ENCODE measurements at regions of chr1 and their contacts with region 1.

Region 1: GRCh38 chr1:155193275-155193990 is 14.3 kb downstream of the THBS3 start:
- DNase-seq: peak; percentile 87
- H3K4me3 Mint-ChIP-seq: peak overlapping the region; percentile 86
- H3K27ac Mint-ChIP-seq: peak overlapping the region; percentile 96
- H3K4me1 Mint-ChIP-seq: peaks cover 25% of the 10 kb centered on the region
- H3K27me3 Mint-ChIP-seq: no peaks in the 10 kb centered on the region

Region 2: GRCh38 chr1:155167166-155168104 is 26.0 kb before region 1 on chr1:
- CTCF ChIA-PET with region 1: interaction called, 201 read pairs
- POLR2A ChIA-PET with region 1: interaction called, 70 read pairs
- intact Hi-C with region 1: loop called (anchors 2 kb)
- DNase-seq: peak; percentile 92
- H3K4me3 Mint-ChIP-seq: peak overlapping the region; percentile 49
- H3K27ac Mint-ChIP-seq: no peak overlapping the region
- H3K4me1 Mint-ChIP-seq: peaks cover 19% of the 10 kb centered on the region
- H3K27me3 Mint-ChIP-seq: no peaks in the 10 kb centered on the region

Region 3: DNA sequence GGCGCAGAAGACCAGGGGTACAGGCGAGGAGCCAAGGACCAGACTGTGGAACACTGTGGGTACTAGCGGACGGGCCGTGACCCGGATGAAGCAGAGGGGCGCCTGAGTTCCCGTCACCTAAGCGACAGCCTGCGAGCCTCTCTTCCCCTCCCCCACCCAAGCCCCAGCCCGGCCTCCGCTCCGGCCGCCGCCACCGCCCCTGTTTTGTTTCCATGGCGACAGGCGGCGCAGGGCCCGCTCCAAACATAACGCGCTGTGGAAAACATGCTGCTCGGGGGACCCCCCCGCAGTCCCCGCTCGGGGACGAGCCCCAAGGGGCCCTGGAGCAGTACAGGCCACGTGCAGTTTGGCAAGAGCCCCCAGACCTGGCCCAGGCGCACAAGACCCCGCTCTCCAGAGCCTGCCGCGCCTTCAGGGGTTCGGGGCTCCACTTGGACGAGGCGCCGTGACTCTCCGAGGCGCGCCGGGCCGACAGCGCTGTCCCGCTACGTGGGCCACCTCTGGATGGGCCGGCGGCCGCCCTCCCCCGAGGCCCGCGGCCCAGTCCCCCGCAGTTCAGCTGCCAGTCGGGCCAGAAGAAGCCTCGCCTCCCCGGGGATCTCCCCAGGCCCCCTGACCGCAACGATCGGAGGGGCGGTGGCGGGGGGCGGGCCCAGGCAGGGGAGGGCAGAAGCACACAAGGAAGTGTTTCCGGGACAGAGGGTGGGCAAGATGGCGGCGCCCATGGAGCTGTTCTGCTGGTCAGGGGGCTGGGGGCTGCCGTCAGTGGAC is 15.3 kb after region 1 on chr1 and contains the start of gene MTX1:
- CTCF ChIA-PET with region 1: interaction called, 77 read pairs
- POLR2A ChIA-PET with region 1: interaction called, 58 read pairs
- intact Hi-C with region 1: loop called (anchors 2 kb)
- DNase-seq: peak; percentile 92
- H3K4me3 Mint-ChIP-seq: peak within 1 kb of the TSS; percentile 83
- H3K27ac Mint-ChIP-seq: peak within 1 kb of the TSS; percentile 89
- H3K4me1 Mint-ChIP-seq: peaks cover 29% of the 10 kb centered on the region
- H3K27me3 Mint-ChIP-seq: no peaks in the 10 kb centered on the region
- total RNA-seq, gene MTX1: 45.2 to 47.9 TPM

Region 4: DNA sequence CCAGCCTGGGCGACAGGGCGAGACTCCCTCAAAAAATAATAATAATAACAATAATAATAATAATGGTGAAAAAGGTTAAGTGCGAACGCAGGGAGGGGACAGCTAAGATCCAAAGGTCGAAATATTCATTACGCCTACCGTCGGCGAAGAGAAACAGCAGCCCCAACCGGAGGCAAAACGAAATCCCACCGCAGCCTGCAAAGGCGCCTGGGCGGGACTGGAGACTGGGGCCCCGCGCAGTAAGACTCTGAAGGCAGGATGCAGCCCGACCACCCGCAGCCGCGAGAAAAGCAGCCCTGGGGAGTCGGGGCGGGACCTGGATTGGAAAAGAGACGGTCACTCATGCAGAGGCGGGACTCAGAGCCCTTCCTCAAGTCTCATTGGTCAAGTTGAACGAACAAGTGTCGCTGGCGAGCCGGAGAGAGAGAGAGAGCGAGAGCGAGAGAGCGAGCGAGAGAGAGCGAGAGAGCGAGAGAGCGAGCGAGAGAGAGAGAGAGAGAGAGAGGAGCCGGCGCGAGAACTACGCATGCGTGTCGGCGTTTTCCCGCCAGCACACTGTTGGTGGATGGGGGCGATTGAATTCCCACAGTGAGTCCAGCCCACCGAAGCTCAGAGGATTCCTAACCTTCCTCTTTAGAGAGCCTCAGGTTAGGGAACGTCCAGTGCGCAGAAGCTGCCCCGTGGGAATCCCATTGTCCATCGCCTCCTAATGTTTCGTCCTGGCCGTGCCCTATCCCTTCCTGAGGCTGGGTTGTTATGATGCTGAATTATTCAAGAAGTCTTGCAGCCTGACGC is 51.1 kb after region 1 on chr1:
- CTCF ChIA-PET with region 1: interaction called, 19 read pairs
- POLR2A ChIA-PET with region 1: interaction called, 9 read pairs
- intact Hi-C with region 1: loop called (anchors 5 kb)
- DNase-seq: peak; percentile 98
- H3K4me3 Mint-ChIP-seq: peak overlapping the region; percentile 76
- H3K27ac Mint-ChIP-seq: peak overlapping the region; percentile 90
- H3K4me1 Mint-ChIP-seq: peaks cover 45% of the 10 kb centered on the region
- H3K27me3 Mint-ChIP-seq: peaks cover 2% of the 10 kb centered on the region

Region 5: GRCh38 chr1:155323798-155324610 is 130.6 kb after region 1 on chr1:
- CTCF ChIA-PET with region 1: interaction called, 9 read pairs
- POLR2A ChIA-PET with region 1: no interaction called
- intact Hi-C with region 1: loop called (anchors 5 kb)
- DNase-seq: peak; percentile 97
- H3K4me3 Mint-ChIP-seq: peak overlapping the region; percentile 83
- H3K27ac Mint-ChIP-seq: peak overlapping the region; percentile 69
- H3K4me1 Mint-ChIP-seq: peaks cover 30% of the 10 kb centered on the region
- H3K27me3 Mint-ChIP-seq: no peaks in the 10 kb centered on the region

Region 6: DNA sequence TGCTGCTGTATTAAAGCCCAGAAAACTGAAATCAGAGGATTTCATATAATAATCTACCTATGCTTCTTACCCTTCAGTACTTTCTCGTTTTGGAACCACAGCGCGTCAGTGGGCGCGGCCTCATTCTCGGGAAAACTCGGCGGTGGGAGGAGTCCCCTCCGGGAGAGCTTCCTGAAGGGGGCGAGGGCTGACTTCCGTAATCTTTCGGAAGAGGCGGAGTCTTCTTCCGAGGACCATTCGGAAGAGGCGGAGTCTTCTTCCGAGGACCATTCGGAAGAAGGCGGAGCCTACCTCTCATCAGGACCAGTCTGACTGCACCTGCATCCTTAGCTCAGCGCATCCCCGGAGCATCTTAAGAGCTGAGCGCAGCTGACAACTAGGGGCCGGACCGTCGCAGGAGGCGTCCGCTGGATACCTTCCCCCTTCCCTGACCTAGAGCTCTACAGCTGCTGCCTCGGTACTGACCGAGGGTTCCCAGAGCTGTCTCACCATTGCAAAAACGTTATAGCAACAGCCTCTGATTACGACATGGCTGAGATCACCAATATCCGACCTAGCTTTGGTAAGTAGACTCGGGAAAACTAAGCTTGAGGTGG is 665.9 kb after region 1 on chr1 and contains the start of gene SYT11:
- CTCF ChIA-PET with region 1: no interaction called
- POLR2A ChIA-PET with region 1: no interaction called
- intact Hi-C with region 1: loop called (anchors 5 kb)
- DNase-seq: peak; percentile 97
- H3K4me3 Mint-ChIP-seq: peak within 1 kb of the TSS; percentile 99
- H3K27ac Mint-ChIP-seq: peak within 1 kb of the TSS; percentile 93
- H3K4me1 Mint-ChIP-seq: peaks cover 45% of the 10 kb centered on the region
- H3K27me3 Mint-ChIP-seq: no peaks in the 10 kb centered on the region
- total RNA-seq, gene SYT11: 25.0 to 25.1 TPM

Measured in activated CD4-positive, alpha-beta memory T cell treated with anti-CD3 and anti-CD28 coated beads for 36 hours (primary cell).